HEK293 (cell line): ENCODE measurements at regions of chr12 and their contacts with region 1.

Region 1: DNA sequence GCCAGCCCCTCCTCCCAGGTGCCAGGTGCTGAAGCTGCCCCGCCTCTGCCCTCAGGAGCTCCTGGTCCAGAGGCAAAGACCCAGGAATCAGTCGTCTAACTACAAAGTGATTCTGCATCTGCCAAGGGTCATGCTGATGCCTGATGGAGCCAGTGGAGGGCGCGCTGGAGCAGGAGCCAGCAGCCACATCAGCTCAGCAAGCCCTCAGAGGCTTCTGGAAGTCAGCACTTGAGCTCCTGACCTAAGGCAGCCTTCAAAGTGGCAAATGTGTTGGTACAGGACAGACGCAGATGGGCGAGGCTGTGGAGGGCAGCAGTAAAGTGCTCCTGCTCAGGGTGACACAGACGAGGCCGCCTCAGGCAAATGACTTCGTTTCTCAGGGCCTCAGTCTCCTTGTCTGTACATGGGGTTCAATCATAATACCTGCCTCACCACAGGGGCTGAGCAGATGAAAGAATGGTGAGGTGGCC is 10.9 kb downstream of the C12orf43 start:
- H3K4me3 ChIP-seq: no peak overlapping the region
- H3K27ac ChIP-seq: no peak overlapping the region
- H3K4me1 ChIP-seq: no peaks in the 10 kb centered on the region
- CTCF ChIP-seq: 0 out of 2 replicates have a peak, but pooled peaks have one; percentile 45

Region 2: DNA sequence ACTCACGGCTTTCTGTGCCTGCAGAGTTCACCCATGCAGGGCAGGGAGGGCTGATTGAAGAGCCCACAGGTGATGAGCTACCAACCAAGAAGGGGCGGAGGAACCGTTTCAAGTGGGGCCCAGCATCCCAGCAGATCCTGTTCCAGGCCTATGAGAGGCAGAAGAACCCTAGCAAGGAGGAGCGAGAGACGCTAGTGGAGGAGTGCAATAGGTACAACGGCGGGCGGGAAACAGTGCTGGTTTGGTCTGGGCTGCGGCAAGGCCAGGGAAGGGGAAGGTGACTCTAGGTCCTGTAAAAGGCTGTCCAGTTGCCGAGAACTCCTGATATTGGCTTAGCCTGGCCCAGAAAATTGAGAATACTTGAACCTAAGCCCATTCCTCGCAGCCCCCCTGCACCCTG is 11.9 kb before region 1 on chr12:
- CTCF ChIA-PET with region 1: interaction called, 25 read pairs
- POLR2A ChIA-PET with region 1: interaction called, 3 read pairs
- H3K4me3 ChIP-seq: no peak overlapping the region
- H3K27ac ChIP-seq: no peak overlapping the region
- H3K4me1 ChIP-seq: no peaks in the 10 kb centered on the region
- CTCF ChIP-seq: no peak

Region 3: GRCh38 chr12:121015825-121016766 is 10.7 kb after region 1 on chr12 and contains the start of gene C12orf43:
- CTCF ChIA-PET with region 1: interaction called, 20 read pairs
- POLR2A ChIA-PET with region 1: no interaction called
- H3K4me3 ChIP-seq: peak within 1 kb of the TSS; percentile 98
- H3K27ac ChIP-seq: peak within 1 kb of the TSS; percentile 44; the same call in 1 of the 2 replicates
- H3K4me1 ChIP-seq: no peaks in the 10 kb centered on the region
- CTCF ChIP-seq: no peak

Region 4: DNA sequence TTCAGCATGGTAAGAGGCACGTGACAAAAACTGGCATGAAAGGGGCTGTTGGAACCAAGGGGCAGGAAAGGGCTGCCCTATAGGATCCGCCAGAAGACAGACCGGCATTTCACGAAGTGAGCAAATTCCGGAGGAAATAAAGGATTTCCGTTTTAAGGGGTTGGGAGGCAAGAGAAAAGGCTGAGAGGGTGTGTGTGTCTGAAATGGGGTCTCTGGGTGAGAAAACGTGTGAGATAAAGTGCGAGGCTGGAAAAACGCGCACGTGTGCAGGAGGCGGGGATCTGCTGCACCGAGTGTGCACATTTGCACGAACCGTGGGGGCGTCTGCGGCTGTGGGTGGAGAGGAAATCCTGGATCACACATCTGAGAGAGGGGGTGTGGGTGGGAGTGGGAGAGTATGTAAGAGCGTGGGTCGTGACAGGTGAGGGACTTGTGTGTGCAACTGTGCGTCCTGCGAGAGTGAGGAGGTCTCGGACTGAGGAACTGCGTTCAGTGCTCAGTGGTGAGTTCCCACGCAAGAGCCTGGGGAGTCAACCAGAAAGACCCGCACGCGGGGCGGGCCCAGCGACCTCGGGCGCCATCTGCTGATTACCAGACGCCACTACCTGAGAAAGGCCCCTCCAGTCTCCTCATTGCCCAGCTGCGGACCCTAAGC is 90.3 kb after region 1 on chr12:
- CTCF ChIA-PET with region 1: interaction called, 13 read pairs
- POLR2A ChIA-PET with region 1: no interaction called
- H3K4me3 ChIP-seq: peak overlapping the region; percentile 33
- H3K27ac ChIP-seq: no peak overlapping the region
- H3K4me1 ChIP-seq: no peaks in the 10 kb centered on the region
- CTCF ChIP-seq: no peak; the same call in none of the 2 replicates

Region 5: GRCh38 chr12:121110211-121110940 is 105.0 kb after region 1 on chr12:
- CTCF ChIA-PET with region 1: interaction called, 12 read pairs
- POLR2A ChIA-PET with region 1: no interaction called
- H3K4me3 ChIP-seq: no peak overlapping the region
- H3K27ac ChIP-seq: no peak overlapping the region
- H3K4me1 ChIP-seq: no peaks in the 10 kb centered on the region
- CTCF ChIP-seq: peak; percentile 81